Activated naive CD4-positive, alpha-beta T cell treated with anti-CD3 and anti-CD28 coated beads for 36 hours (primary cell): ENCODE measurements at regions of chr7 and their contacts with region 1.

Region 1: GRCh38 chr7:66114793-66115649 is at the start of gene CRCP:
- DNase-seq: peak; percentile 87
- H3K4me3 Mint-ChIP-seq: peak within 1 kb of the TSS; percentile 99
- H3K27ac Mint-ChIP-seq: peak within 1 kb of the TSS; percentile 93
- H3K4me1 Mint-ChIP-seq: peaks cover 43% of the 10 kb centered on the region
- H3K27me3 Mint-ChIP-seq: no peaks in the 10 kb centered on the region
- total RNA-seq, gene CRCP: 18.5 to 19.6 TPM

Region 2: DNA sequence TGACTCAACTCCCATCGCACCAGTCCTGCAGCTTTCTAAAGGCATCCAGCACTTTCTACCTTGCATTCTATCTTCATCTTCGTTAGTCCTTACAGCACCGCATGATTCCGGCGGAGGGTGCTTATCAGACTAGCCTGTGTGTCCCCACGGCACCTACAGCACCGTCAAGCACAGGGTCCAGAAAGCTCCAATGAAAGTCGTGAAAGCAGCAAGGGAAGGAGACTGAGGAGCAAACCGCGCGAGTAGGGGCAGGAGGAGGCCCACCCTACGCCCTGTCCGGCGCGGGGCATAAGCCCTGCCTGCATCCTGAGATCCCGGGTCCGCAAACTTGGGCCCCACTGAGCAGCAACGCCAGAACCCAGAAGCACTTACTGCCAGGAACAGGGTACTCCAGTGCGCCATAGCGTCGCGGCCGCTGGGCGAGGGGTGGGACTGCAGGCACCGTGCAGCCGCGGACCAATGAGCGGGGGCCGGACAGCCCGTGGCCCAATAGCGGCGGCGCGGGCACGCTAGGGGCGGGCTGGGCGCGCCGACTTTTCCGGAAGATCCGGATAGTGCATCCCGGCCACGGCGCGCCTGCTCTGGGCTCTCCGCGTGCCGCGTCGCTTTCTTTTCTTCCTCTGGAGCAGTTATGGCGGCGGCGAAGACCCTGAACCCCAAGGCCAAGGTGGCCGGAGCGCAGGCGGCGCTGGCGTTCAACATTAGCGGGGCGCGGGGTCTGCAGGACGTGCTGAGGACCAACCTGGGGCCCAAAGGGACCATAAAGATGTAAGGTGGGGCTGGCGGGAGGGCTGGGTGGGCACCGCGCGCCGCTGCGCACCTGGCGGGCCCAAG is 364.3 kb before region 1 on chr7:
- CTCF ChIA-PET with region 1: no interaction called
- intact Hi-C with region 1: loop called (anchors 1 kb)
- DNase-seq: peak; percentile 89
- H3K4me3 Mint-ChIP-seq: peak overlapping the region; percentile 84
- H3K27ac Mint-ChIP-seq: peak overlapping the region; percentile 98
- H3K4me1 Mint-ChIP-seq: peaks cover 40% of the 10 kb centered on the region
- H3K27me3 Mint-ChIP-seq: no peaks in the 10 kb centered on the region

Region 3: DNA sequence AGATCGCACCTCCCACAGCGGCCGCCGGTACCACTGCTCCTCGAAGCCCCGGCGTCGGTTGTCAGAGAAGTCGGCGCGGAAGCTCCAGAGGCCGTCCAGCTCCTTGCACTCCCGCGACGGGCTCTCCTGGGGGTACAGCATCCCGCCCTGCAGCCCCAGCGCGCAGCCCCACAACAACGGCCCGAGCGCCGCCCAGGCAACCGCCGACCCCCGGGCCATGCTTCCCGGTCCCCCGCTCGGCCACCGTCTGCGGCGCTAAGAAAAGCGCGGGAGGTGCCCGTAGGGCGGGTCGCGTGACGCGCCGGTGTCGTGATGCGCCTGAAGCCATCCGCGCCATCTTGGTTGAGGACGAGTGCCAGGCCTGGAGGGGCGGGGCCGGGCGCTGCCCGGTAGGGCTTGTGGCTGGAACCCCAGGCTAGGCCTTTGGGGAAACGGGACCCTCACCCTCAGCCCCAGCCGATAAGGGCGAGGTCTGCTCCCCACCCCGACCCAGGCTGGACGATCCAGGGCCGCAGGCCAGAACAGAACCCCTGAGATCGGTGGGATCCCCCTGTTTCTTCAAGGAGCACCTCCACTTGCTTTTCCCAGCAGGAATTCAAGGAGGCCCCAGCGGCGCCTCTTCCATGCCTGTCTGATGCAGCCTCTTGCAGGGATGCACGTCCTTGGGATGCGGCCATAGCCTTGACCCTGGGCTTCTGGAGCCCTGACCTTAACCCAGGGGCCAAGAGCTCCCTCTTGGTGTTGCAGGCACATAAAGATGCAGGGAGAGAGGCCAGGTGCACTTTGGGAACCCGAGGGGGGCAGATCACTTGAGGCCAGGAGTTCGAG is 132.8 kb before region 1 on chr7 and contains the start of gene GUSB:
- CTCF ChIA-PET with region 1: no interaction called
- intact Hi-C with region 1: loop called (anchors 1 kb)
- DNase-seq: peak; percentile 93
- H3K4me3 Mint-ChIP-seq: peak within 1 kb of the TSS; percentile 87
- H3K27ac Mint-ChIP-seq: peak within 1 kb of the TSS; percentile 78
- H3K4me1 Mint-ChIP-seq: peaks cover 8% of the 10 kb centered on the region
- H3K27me3 Mint-ChIP-seq: no peaks in the 10 kb centered on the region
- total RNA-seq, gene GUSB: 42.8 to 44.0 TPM

Region 4: GRCh38 chr7:66075590-66076461 is 39.2 kb before region 1 on chr7 and contains the start of gene ASL:
- CTCF ChIA-PET with region 1: no interaction called
- intact Hi-C with region 1: loop called (anchors 1 kb)
- DNase-seq: peak; percentile 87
- H3K4me3 Mint-ChIP-seq: peak within 1 kb of the TSS; percentile 70
- H3K27ac Mint-ChIP-seq: no peak within 1 kb of the TSS
- H3K4me1 Mint-ChIP-seq: peaks cover 12% of the 10 kb centered on the region
- H3K27me3 Mint-ChIP-seq: no peaks in the 10 kb centered on the region
- total RNA-seq, gene ASL: 12.7 to 13.6 TPM

Region 5: DNA sequence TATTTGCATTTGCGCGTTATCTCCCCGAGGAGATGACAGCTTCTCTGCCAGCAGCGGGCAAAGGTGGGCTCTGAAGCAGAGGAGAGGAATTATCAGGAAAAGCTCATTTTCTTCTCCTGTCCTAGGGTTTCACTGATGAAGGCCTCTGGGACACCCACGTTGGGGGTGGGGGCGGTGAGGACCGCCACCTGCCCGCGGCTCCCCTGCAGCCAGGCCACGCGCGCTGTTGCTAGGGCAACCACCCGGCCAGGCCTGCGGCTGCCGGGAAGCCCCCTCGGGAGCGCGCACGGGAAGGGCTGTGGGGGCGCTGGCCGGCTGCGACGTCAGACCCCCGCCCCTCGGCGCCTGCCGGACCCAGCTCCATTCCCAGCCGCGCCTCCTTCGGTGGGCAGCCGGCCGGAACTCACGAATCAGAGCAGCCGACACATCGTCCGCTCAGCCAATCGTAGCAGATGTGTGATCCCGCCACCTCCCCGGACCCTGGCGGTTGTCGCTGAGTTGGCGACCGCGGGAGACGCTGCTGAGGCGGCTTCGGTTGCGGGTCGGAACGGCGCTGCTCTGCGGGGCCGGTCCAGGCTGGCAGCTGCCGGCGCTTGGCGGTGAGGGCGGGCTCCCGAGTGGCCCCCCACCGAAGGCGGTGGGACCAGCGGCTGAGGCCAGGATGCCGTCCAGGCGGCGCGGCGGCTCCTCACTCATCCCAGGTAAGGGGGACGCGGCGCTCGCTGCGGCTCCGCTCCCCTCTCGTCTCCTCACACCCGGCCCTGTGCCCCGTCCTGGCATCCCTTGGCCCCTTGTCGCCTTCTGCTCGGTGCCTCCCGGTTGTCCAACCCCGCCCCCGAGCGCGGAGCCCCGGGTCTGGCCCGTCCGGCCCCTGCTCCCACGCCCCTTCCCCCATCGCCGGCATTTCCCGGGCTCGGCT is 90.1 kb after region 1 on chr7 and contains the start of gene TPST1:
- CTCF ChIA-PET with region 1: no interaction called
- intact Hi-C with region 1: loop called (anchors 5 kb)
- DNase-seq: peak; percentile 84
- H3K4me3 Mint-ChIP-seq: peak within 1 kb of the TSS; percentile 88
- H3K27ac Mint-ChIP-seq: no peak within 1 kb of the TSS
- H3K4me1 Mint-ChIP-seq: peaks cover 29% of the 10 kb centered on the region
- H3K27me3 Mint-ChIP-seq: peaks cover 13% of the 10 kb centered on the region
- total RNA-seq, gene TPST1: 1.9 to 3.8 TPM

Region 6: GRCh38 chr7:66281678-66282590 is 166.9 kb after region 1 on chr7:
- CTCF ChIA-PET with region 1: no interaction called
- intact Hi-C with region 1: no loop called
- DNase-seq: no peak
- H3K4me3 Mint-ChIP-seq: no peak overlapping the region
- H3K27ac Mint-ChIP-seq: no peak overlapping the region
- H3K4me1 Mint-ChIP-seq: no peaks in the 10 kb centered on the region
- H3K27me3 Mint-ChIP-seq: no peaks in the 10 kb centered on the region

Region 7: DNA sequence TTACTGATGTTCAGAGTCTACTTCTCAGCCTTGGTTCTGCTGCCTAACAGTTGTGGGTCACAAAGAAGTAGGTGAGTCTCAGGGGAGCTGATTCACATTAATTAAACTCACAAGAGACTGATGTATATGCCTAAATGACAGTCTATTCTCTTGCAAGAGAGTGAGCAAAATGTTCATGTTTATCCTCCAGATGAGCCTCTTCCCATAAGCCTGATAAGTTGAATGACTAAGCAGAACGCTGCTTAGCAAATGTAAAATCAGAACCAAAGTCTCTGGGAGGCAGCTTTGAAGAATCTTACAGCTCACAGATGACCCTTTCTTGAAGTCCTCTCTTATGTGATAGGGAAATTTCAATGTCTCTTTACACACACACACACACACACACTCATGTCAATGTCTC is 1973.9 kb after region 1 on chr7:
- CTCF ChIA-PET with region 1: no interaction called
- intact Hi-C with region 1: no loop called
- DNase-seq: no peak
- H3K4me3 Mint-ChIP-seq: no peak overlapping the region
- H3K27ac Mint-ChIP-seq: no peak overlapping the region
- H3K4me1 Mint-ChIP-seq: no peaks in the 10 kb centered on the region
- H3K27me3 Mint-ChIP-seq: no peaks in the 10 kb centered on the region